IMR-90 (cell line): ENCODE measurements at regions of chr15 and their contacts with region 1.

Region 1: DNA sequence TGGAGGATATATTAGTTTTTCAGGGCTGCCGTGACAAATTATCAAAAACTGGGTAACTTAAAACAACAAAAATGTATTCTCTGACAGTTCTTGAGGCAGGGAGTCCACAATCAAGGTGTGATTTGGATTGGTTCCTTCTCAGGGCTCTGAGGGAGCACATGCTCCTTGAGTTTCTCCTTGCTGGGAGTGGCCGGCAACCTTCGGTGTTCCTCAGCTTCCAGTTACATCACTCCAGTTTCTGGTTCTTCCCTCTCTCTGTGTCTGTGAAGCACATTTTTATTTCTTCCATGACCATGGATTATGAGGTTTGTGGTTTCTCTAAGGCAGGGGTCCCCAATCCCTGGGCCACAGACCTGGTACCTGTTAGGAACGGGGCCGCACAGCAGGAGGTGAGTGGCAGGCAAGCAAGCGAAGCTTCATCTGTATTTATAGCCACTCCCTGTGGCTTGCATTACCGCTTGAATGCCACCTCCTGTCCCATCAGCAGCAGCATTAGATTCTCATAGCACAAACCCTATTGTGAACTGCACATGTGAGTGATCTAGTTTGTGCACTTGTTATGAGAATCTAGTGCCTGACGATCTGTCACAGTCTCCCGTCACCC is 24.3 kb downstream of the LRRC28 start:
- DNase-seq: no peak
- ATAC-seq: no peak
- H3K4me3 ChIP-seq: no peak overlapping the region
- H3K27ac ChIP-seq: no peak overlapping the region
- H3K4me1 ChIP-seq: no peaks in the 10 kb centered on the region
- H3K27me3 ChIP-seq: no peaks in the 10 kb centered on the region
- CTCF ChIP-seq: no peak
- POLR2A ChIP-seq: no peak
- RAD21 ChIP-seq: no peak

Region 2: GRCh38 chr15:99755692-99756409 is 480.2 kb after region 1 on chr15:
- CTCF ChIA-PET with region 1: interaction called, 6 read pairs
- POLR2A ChIA-PET with region 1: no interaction called
- dilution Hi-C with region 1: no loop called
- in situ Hi-C with region 1: no loop called
- intact Hi-C with region 1: loop called (anchors 1 kb)
- DNase-seq: peak; percentile 67
- ATAC-seq: peak; percentile 96
- H3K4me3 ChIP-seq: no peak overlapping the region
- H3K27ac ChIP-seq: no peak overlapping the region
- H3K4me1 ChIP-seq: no peaks in the 10 kb centered on the region
- H3K27me3 ChIP-seq: peaks cover 18% of the 10 kb centered on the region; the same call in 1 of the 2 replicates
- CTCF ChIP-seq: peak; percentile 86
- POLR2A ChIP-seq: no peak
- RAD21 ChIP-seq: peak; percentile 81

Region 3: DNA sequence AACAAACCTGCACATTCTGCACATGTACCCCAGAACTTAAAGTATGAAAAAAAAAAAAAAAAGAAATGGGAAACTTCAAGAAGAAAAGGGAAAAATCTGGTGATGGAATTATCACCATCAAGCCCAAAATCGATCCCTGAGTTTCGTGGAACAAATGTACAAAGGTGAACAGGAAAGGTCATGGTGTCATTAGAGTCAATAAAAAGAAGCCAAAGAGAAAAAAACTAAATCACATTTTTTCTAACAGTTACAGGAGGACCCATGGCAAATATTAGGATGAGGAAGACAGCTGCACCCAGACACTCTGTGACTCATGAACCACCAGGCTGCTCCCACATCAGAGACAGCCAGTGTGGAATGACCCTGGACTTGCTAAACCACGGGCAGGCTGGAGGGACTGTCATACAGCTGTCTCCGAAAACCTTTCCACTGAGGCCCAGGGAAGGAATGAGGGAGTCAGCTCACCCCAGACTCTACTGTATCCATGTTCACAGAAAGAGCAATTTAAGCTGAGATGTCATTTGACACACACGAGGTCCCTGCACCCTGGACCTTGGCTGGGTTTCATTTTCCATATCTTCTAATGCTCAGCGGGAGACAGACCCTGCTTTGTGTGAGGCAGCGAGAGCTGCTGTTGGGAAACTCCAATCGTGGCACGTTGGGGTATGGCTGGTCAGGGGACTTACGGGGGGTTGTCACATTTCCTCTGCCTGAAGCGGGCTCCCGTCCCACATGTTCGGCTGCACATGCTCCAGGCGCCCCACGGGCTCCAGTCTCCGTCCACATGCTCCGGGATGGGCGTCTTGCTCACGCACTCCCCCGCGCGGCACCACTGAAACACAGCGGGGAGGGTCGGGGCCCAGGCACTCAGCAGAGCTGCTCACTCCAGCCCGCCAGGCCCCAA is 855.9 kb after region 1 on chr15:
- CTCF ChIA-PET with region 1: no interaction called
- POLR2A ChIA-PET with region 1: no interaction called
- dilution Hi-C with region 1: no loop called
- in situ Hi-C with region 1: no loop called
- intact Hi-C with region 1: loop called (anchors 10 kb)
- DNase-seq: peak; percentile 39
- ATAC-seq: peak; percentile 92
- H3K4me3 ChIP-seq: peak overlapping the region; percentile 31
- H3K27ac ChIP-seq: no peak overlapping the region
- H3K4me1 ChIP-seq: no peaks in the 10 kb centered on the region
- H3K27me3 ChIP-seq: peaks cover 3% of the 10 kb centered on the region
- CTCF ChIP-seq: peak; percentile 43
- POLR2A ChIP-seq: no peak
- RAD21 ChIP-seq: peak; percentile 57